Dendritic cell treated with granulocyte-macrophage colony-stimulating factor and Interleukin-4, amounts not matched to agents 40 ng/mL and 50 ng/mL, for 4 days (primary cell): ENCODE measurements at regions of chr1 and their contacts with region 1.

Region 1: GRCh38 chr1:25810341-25811299 is 9.1 kb upstream of the MTFR1L start:
- H3K4me3 Mint-ChIP-seq: no peak overlapping the region
- H3K27ac Mint-ChIP-seq: no peak overlapping the region
- H3K4me1 Mint-ChIP-seq: peaks cover 41% of the 10 kb centered on the region
- H3K27me3 Mint-ChIP-seq: no peaks in the 10 kb centered on the region

Region 2: DNA sequence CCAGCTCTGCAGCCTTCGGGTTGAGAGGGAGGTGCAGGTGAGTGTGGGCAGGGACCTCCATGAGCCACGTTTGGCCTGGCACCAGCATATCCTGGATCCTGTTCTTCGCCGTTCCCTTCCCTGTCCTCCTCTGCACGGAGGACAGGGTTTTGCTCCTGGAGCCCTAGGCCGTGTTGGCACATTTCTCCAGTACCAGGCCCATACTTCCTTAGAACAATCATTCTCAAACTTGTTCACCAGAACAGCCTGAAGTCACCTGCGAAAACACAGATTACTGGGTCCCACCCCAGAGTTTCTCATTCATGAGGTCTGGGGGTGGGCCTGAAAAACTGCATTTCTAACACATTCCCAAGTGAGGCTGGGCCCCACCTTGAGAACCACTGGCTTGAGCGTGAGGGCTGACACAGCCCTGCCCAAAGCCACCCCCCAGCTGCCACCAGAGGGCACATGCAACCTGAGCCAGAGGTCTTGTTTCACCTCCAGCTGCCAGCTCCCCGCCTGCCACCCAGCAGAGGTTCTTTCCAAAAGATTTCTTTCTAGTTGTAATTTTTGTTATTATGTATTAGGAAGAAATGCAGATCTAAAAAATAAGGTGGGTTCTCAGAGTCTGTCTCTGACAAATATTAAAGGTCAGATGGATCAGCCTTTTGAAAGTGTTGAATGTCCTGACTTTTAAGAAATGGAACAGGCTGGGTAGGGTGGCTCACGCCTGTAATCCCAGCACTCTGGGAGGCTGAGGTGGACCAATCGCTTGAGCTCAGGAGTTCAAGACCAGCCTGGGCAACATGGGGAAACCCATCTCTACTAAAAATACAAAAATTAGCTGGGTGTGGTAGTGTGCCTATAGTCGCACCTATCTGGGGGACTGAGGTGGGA is 306.8 kb before region 1 on chr1:
- intact Hi-C with region 1: loop called (anchors 5 kb)
- H3K4me3 Mint-ChIP-seq: no peak overlapping the region
- H3K27ac Mint-ChIP-seq: no peak overlapping the region
- H3K4me1 Mint-ChIP-seq: peaks cover 15% of the 10 kb centered on the region
- H3K27me3 Mint-ChIP-seq: peaks cover 2% of the 10 kb centered on the region